ENCODE measurements at regions of chr1 and their contacts with region 1.

Region 1: DNA sequence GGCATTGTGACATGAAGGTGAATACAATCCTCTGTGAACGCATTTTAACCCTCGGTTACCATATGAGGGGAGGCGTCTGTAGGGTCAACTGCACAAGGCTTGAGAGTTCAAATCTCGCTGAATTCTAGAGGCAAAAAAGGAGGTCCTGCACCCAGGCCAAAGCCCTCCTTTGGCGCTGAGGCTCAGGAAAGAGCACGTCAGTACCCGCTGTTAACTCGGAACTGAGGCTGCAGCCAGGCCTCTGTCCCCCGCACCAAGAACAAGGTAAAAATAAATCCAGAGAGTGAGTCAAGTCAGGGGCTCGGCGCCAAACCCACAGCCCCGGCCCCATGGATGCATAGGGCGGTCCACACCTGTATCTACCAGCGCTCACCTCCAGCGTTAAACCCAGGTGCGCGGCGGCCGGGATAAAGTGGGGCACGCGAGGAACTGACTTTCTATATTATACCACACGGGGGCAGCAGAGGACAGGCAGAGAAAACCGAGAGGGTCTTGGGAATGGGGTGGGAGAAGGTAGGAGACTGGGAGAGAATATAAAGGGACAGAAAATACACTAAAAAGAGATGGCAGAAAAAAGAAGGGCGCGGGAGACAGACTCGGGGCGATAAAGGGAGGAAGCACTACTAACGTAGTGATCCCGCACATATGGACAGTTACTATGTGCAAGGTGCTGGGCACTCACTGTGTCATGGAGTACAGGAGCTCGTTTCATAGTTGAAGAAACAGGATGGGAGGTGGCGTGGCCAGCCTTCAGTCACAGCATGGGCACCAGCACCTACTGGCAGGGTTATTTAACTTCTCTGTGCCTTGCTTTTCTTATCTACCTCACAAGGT is 54.8 kb downstream of the DMRTA2 start:
- DNase-seq: no peak
- H3K4me3 ChIP-seq: no peak overlapping the region; the same call in 1 of the 2 replicates
- CTCF ChIP-seq: peak; percentile 61

Region 2: DNA sequence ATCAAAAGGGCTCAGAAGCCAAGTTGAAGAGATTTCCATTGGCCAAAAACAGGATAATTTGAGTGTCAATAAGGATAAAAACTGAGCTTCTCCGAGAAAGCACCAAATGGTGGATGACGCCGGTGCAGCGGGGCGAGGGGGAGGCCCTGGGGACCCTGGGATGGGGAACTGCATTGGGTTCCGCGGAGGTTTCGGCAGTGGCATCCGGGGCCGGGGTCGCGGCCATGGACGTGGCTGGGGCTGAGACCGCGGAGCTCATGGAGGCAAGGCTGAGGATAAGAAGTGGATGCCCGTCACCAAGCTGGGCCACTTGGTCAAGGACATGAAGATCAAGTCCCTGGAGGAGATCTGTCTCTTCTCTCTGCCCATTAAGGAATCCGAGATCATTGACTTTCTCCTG is 42.4 kb before region 1 on chr1:
- CTCF ChIA-PET with region 1: no interaction called
- POLR2A ChIA-PET with region 1: no interaction called
- DNase-seq: no peak
- H3K4me3 ChIP-seq: no peak overlapping the region
- CTCF ChIP-seq: no peak

Region 3: DNA sequence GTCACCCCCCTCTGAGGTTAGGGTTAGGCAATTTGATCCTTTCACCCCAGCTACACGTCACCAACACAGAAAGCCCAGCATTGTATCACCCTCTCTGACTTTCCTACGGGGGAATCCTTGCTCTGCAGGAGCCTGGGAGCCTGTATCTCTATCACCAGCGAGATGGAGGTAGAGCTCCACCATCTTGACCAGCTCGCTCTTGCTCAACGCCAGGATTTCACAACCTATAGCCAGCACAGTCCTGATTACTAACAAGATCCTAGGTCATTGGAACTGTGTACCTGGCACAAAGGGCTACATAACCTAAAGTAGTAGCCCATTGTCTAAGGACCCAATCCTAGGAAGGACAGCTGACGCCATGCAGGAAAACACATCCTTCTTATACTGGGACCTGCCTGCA is 11.2 kb before region 1 on chr1:
- CTCF ChIA-PET with region 1: interaction called, 10 read pairs
- POLR2A ChIA-PET with region 1: no interaction called
- DNase-seq: no peak
- H3K4me3 ChIP-seq: no peak overlapping the region
- CTCF ChIP-seq: no peak

Region 4: DNA sequence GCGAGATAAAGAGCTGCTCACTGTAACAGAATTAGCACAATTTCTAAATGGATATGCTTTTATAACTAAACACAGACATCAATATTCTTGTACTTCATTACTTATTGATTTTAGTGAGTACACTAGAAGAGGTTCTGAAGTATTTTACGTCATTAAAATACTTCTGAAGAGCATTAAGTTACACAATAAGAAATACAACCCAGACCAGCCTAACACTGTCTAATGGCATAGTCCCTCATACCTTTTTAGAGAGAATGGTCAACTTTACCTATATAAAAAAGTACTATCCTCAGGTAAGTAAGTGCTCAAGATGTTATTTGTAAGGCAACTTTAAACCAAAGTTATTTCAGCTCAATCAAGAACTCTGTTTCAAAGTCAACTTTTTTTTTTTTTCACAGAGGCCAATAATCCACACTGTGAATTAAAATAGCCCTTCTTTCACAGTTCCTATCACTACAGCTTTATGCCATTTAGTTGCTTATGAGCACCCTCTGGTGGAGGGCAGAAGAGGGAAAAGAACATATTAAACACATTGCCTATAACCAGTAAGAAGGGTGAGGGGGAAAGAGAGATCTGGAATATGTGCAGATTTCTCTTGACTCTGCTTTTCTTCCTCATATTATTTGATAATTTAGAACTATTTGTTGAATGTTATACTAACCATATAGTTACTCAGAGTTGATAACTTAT is 236.9 kb after region 1 on chr1:
- CTCF ChIA-PET with region 1: interaction called, 110 read pairs
- POLR2A ChIA-PET with region 1: no interaction called
- DNase-seq: no peak
- H3K4me3 ChIP-seq: no peak overlapping the region
- CTCF ChIP-seq: peak; percentile 40

Region 5: DNA sequence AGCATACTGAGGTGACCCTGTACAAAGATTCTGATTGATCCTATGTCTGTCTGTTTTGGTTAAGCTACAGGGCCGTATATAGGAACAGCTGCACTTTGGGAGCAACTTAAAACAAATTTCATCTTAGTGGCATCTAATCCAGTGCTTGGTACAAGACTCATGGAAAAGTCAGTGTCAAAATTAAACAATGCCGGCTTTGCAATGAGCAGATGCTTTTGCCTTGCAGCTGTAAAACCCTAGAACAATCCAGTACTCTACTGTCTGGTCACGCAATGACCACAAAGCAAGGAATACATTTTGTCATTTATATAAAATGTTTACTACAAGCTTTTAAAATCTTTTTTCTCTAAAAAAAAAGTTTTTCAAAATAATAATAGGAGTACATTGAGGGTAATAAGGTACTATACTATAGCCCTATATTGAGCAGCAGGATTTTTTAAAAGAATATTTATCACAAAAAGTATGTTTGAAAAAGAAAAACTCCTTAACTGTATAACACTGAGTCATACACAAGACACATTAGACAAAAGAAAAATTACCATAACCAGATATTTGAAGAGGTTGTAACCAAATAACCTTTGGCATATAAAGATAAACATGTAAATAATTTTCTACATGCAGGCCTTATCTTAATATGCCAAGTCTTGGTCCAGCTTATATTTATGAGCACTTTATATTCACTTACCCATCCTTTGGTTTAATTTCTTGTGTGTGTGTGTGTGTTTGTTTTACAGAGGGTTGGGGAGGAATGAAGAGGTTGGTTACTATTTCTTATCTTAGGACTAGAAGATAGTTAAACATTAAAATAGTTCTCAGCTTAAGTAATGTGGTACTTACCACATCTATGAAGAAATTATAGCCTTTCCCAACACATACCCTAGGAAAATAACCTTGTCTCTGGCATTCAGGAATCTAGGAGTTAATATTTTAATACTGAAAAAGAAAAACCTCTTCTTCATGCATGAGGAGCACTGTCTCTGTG is 329.3 kb after region 1 on chr1:
- CTCF ChIA-PET with region 1: interaction called, 61 read pairs
- POLR2A ChIA-PET with region 1: no interaction called
- DNase-seq: peak; percentile 24
- H3K4me3 ChIP-seq: no peak overlapping the region
- CTCF ChIP-seq: no peak

Region 6: GRCh38 chr1:50704126-50704525 is 335.7 kb after region 1 on chr1:
- CTCF ChIA-PET with region 1: interaction called, 61 read pairs
- POLR2A ChIA-PET with region 1: no interaction called
- DNase-seq: no peak
- H3K4me3 ChIP-seq: no peak overlapping the region
- CTCF ChIP-seq: peak; percentile 65

Region 7: GRCh38 chr1:50735443-50735842 is 367.0 kb after region 1 on chr1:
- CTCF ChIA-PET with region 1: interaction called, 10 read pairs
- POLR2A ChIA-PET with region 1: no interaction called
- DNase-seq: no peak
- H3K4me3 ChIP-seq: no peak overlapping the region
- CTCF ChIP-seq: peak; percentile 14

Measured in AG04449 (cell line).